Activated CD4-positive, alpha-beta T cell treated with anti-CD3 and anti-CD28 coated beads for 36 hours (primary cell): ENCODE measurements at regions of chr20 and their contacts with region 1.

Region 1: GRCh38 chr20:62302341-62303058 is at the start of gene ADRM1:
- DNase-seq: peak; percentile 98
- ATAC-seq: peak; percentile 83
- H3K4me3 Mint-ChIP-seq: peak within 1 kb of the TSS; percentile 91
- H3K27ac Mint-ChIP-seq: peak within 1 kb of the TSS; percentile 99
- H3K4me1 Mint-ChIP-seq: peaks cover 22% of the 10 kb centered on the region
- H3K27me3 Mint-ChIP-seq: no peaks in the 10 kb centered on the region
- total RNA-seq, gene ADRM1: 92.8 to 103 TPM

Region 2: GRCh38 chr20:62065669-62066338 is 236.7 kb before region 1 on chr20 and contains the start of gene TAF4:
- CTCF ChIA-PET with region 1: no interaction called
- POLR2A ChIA-PET with region 1: interaction called, 3 read pairs
- intact Hi-C with region 1: loop called in 1 of 2 experiments (anchors 1 kb)
- DNase-seq: peak; percentile 87
- ATAC-seq: peak; percentile 79
- H3K4me3 Mint-ChIP-seq: peak within 1 kb of the TSS; percentile 75
- H3K27ac Mint-ChIP-seq: peak within 1 kb of the TSS; percentile 78
- H3K4me1 Mint-ChIP-seq: peaks cover 53% of the 10 kb centered on the region
- H3K27me3 Mint-ChIP-seq: no peaks in the 10 kb centered on the region
- total RNA-seq, gene TAF4: 15.4 to 27.1 TPM

Region 3: DNA sequence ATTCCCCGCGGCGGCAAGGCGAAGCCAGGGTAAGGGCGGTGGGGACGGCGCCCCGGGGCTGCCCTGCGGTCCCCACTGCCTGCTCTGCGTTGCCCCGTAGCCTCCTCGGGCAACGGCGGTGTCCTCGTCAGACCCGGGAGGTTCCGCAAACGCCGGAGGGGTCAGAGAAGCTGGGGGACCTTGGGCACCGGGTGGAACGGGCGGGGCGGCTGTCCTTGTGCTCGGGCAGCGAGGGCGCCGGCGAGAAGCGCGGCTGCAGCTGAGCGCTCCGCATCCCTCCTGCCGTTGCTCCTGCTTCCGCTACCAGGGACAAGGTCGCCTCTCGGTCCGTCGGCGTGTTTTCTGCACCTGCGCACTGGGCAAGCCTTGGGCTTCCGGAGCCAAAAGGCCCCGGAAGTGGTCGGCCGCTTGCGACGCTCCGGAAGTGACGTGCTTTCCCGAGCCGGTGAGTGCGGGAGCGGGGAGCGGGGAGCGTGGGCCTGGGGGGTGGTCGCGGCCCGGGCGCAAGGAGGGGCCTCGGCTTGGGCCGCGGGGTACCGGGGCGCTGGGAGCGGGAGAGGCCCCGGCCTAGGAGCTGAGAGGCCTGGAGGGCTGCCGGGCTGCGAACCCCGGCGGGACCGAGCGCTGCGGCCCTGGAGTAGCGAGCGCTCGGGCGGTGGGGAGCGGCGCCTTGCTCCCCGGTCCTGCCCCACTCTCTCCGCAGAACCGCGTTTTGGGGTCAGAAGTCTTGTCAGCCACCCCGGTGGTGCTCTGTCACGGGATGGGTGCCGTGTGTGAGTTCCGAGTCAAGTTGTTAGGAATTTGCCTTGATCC is 119.7 kb before region 1 on chr20 and contains the start of gene MTG2:
- CTCF ChIA-PET with region 1: no interaction called
- POLR2A ChIA-PET with region 1: no interaction called
- intact Hi-C with region 1: loop called in 1 of 2 experiments (anchors 1 kb)
- DNase-seq: peak; percentile 97
- ATAC-seq: peak; percentile 99
- H3K4me3 Mint-ChIP-seq: peak within 1 kb of the TSS; percentile 88
- H3K27ac Mint-ChIP-seq: peak within 1 kb of the TSS; percentile 87
- H3K4me1 Mint-ChIP-seq: peaks cover 39% of the 10 kb centered on the region
- H3K27me3 Mint-ChIP-seq: no peaks in the 10 kb centered on the region
- total RNA-seq, gene MTG2: 38.0 to 44.9 TPM

Region 4: DNA sequence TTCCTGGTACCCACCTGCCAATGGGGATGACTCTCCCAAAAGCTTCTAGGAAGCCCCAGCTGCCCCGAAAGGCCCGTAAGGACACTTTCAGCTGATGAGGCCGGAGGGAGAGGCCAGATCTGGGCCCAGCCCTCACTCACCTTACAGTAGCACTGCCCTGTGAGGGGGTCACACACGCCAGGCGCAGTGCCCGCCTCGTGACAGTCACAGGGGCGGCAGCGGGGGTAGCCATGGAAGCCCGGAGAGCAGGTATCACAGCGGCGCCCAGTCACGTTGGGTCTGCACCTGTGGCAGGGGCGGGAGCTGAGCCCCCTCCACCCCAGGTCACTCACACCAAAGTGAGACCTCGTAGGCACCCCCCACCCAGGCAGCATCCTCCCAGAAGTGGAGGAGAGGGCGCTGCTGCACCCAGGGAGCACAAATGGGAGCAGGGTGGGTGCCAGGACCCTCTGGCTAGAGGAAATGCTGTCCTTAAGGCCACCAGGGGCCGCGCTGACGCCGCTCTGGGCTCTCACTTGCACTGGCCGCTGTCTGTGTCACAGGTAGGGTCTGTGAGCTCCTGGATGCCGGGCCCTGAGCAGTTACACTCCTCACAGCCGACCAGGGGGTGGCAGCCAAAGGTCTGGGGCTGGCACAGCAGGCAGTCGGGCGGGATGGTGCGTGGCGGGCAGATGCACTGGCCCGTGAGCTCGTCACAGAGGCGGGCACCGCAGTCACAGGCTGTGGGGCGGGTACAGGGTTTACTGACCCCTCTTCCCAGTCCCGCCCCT is 25.4 kb after region 1 on chr20:
- CTCF ChIA-PET with region 1: no interaction called
- POLR2A ChIA-PET with region 1: no interaction called
- intact Hi-C with region 1: no loop called
- DNase-seq: no peak
- ATAC-seq: no peak
- H3K4me3 Mint-ChIP-seq: no peak overlapping the region
- H3K27ac Mint-ChIP-seq: no peak overlapping the region
- H3K4me1 Mint-ChIP-seq: no peaks in the 10 kb centered on the region
- H3K27me3 Mint-ChIP-seq: no peaks in the 10 kb centered on the region

Region 5: DNA sequence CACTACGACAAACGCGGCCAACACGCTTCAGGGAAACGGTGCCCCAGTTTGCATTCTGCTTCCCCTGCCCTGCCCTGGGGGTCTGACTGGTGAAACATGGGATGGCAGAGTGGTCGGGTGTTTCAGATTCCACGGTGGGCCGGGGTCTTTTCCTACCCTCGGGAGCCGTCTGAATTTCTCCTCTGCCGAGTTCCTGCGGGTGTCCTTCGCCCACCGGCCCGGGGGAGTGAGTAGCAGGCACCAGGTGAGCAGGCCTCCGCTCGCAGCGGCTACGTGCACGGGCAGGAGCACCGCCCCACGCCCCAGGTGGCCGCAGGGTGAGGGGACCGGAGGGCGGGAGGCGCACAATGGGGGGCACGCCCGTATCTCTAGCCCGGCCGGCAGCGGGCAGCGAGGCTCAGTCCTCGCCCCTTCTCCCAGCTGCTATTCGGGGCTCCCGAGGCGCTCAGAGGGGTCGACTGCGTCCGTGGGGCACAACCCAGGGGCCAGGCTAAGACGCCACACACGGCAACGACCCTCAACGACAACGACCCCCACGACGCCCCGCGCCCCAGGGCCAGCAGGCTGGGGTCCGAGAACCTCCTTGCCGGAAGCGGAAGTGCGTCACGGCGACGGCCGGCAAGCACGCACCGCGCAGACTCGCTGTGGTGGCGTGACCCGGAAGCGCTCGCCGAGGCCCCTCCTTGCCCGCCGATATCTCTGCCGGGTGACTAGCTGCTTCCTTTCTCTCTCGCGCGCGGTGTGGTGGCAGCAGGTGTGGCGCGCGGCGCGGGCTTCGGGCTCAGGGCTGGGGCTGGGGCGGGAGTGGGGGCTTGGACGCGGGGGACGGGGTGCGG is 84.1 kb after region 1 on chr20 and contains the start of gene RPS21:
- CTCF ChIA-PET with region 1: interaction called, 10 read pairs
- POLR2A ChIA-PET with region 1: interaction called, 7 read pairs
- intact Hi-C with region 1: loop called (anchors 1 kb)
- DNase-seq: peak; percentile 97
- ATAC-seq: peak; percentile 91
- H3K4me3 Mint-ChIP-seq: peak within 1 kb of the TSS; percentile 93
- H3K27ac Mint-ChIP-seq: peak within 1 kb of the TSS; percentile 94
- H3K4me1 Mint-ChIP-seq: peaks cover 42% of the 10 kb centered on the region
- H3K27me3 Mint-ChIP-seq: no peaks in the 10 kb centered on the region
- total RNA-seq, gene RPS21: 1,051 to 2,439 TPM

Region 6: GRCh38 chr20:62476056-62476838 is 173.7 kb after region 1 on chr20:
- CTCF ChIA-PET with region 1: no interaction called
- POLR2A ChIA-PET with region 1: no interaction called
- intact Hi-C with region 1: no loop called
- DNase-seq: peak; percentile 27
- ATAC-seq: peak; percentile 12
- H3K4me3 Mint-ChIP-seq: no peak overlapping the region
- H3K27ac Mint-ChIP-seq: no peak overlapping the region
- H3K4me1 Mint-ChIP-seq: no peaks in the 10 kb centered on the region
- H3K27me3 Mint-ChIP-seq: peaks cover 34% of the 10 kb centered on the region

Region 7: GRCh38 chr20:62616728-62617621 is 314.5 kb after region 1 on chr20:
- CTCF ChIA-PET with region 1: interaction called, 5 read pairs
- POLR2A ChIA-PET with region 1: no interaction called
- intact Hi-C with region 1: loop called in 1 of 2 experiments (anchors 2 kb)
- DNase-seq: peak; percentile 88
- ATAC-seq: peak; percentile 75
- H3K4me3 Mint-ChIP-seq: peak overlapping the region; percentile 57
- H3K27ac Mint-ChIP-seq: peak overlapping the region; percentile 91
- H3K4me1 Mint-ChIP-seq: peaks cover 29% of the 10 kb centered on the region
- H3K27me3 Mint-ChIP-seq: no peaks in the 10 kb centered on the region

Region 8: GRCh38 chr20:62740286-62741141 is 438.0 kb after region 1 on chr20:
- CTCF ChIA-PET with region 1: no interaction called
- POLR2A ChIA-PET with region 1: no interaction called
- intact Hi-C with region 1: loop called in 1 of 2 experiments (anchors 1 kb)
- DNase-seq: peak; percentile 90
- ATAC-seq: peak; percentile 86
- H3K4me3 Mint-ChIP-seq: peak overlapping the region; percentile 58
- H3K27ac Mint-ChIP-seq: peak overlapping the region; percentile 89
- H3K4me1 Mint-ChIP-seq: peaks cover 52% of the 10 kb centered on the region
- H3K27me3 Mint-ChIP-seq: peaks cover 3% of the 10 kb centered on the region

Region 9: GRCh38 chr20:62937366-62938104 is 635.0 kb after region 1 on chr20:
- CTCF ChIA-PET with region 1: no interaction called
- POLR2A ChIA-PET with region 1: no interaction called
- intact Hi-C with region 1: loop called in 1 of 2 experiments (anchors 1 kb)
- DNase-seq: peak; percentile 99
- ATAC-seq: peak; percentile 90
- H3K4me3 Mint-ChIP-seq: no peak overlapping the region
- H3K27ac Mint-ChIP-seq: peak overlapping the region; percentile 96
- H3K4me1 Mint-ChIP-seq: peaks cover 44% of the 10 kb centered on the region
- H3K27me3 Mint-ChIP-seq: no peaks in the 10 kb centered on the region